AG04449 (cell line): ENCODE measurements at regions of chr1 and their contacts with region 1.

Region 1: GRCh38 chr1:200558866-200559459 is 61.6 kb downstream of the KIF14 start:
- DNase-seq: peak; percentile 21
- H3K4me3 ChIP-seq: no peak overlapping the region
- CTCF ChIP-seq: peak; percentile 62

Region 2: DNA sequence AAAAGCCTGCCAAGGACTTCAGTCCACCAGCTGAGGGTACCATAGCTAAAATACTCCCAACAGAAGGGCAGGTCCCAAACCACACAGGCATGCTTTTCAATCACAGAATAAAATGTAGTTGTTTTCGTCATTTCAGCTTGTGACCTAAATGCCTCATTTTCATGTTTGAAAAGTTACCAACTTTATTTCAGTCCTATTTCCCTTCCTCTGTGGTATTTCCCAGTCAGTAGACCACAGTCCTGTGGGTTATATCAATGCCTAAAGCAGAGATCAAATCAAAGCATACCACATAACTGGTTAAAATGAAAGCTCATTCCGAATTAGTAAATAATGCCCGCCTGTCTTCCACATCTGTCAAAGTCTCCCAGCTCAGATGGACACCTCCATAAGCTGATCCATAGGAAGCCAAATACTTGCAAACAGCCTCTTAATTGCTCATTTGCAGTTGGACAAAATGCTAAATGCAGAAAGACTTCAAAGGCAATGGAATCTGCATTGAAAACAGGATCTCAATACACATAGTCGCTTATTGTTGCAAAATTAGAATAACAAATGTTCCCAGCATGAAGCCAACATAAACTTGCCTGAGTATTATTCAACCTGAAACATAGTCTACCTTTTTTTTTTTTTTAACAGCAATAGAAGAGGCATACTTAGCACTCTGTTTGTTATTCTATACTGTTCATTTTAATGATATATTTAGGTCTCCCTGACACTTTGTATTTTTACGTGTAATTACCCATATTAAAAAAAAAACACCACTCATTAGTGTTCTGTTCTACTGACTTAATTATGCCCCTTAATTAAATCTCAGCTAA is 477.6 kb before region 1 on chr1:
- CTCF ChIA-PET with region 1: no interaction called
- POLR2A ChIA-PET with region 1: no interaction called
- DNase-seq: no peak
- H3K4me3 ChIP-seq: no peak overlapping the region
- CTCF ChIP-seq: no peak

Region 3: GRCh38 chr1:200538179-200538578 is 20.8 kb before region 1 on chr1:
- CTCF ChIA-PET with region 1: interaction called, 18 read pairs
- POLR2A ChIA-PET with region 1: no interaction called
- DNase-seq: no peak
- H3K4me3 ChIP-seq: no peak overlapping the region
- CTCF ChIP-seq: no peak

Region 4: DNA sequence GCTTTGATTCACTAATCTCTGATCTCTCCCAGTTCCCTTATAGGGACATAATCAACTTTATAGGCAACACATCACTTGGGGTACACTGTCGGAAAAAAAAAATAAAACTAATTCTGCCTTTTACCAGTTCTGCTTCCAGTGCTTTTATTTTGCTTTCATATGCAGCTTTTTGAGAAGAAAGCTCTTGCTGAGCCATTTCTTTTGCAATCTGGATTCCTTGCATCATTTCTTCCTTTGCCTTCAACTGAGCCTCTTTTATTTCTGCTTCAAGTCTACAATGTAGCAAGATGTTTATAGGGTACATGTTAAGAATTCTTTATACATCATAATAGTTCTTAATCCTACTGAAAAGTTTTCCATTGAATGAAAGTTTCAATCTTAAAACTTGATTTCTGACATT is 31.0 kb after region 1 on chr1:
- CTCF ChIA-PET with region 1: interaction called, 11 read pairs
- POLR2A ChIA-PET with region 1: no interaction called
- DNase-seq: no peak
- H3K4me3 ChIP-seq: no peak overlapping the region
- CTCF ChIP-seq: no peak

Region 5: DNA sequence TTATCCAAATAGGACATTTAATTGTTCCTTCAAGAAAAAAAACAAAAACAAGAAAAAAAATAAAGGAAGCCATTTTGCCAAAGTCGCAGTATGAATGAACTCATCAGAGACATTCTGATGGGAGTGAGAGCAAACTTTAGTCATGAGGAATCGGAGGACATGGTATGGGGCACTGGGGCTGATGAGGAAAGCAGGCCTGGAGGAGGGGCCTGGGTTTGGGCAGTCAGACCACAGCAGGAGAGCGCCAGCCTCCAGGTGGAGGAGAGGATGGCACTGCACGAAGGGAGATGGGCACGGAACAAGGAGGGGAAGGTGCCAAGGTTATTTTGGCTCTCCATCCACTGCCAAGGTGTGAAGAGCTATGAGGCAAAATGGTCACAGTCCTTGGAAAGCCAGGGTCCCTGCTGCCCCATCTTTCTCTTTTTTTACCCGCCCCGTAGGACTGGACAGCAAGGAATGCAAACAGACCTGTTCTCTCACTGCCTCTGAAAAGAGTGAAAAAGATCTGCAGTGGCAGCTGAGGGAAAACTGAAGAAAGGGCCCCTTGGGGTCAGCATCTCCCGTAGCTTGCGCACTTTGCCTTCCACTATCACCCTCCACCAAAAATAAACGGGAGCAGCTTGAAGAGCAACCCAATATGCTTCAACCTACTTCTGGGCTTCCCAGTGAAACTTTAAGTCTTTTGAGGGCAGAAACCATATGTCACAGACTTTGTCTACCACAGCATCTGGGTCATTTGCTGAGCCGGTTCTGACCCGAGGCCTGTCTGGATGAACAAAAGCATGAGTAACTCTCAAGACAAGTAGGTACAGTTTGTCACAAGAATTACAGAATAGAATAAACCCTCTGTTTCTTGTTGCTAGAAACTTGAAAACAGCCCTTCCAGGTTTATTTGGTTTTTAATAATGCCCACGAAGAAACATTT is 70.9 kb after region 1 on chr1:
- CTCF ChIA-PET with region 1: no interaction called
- POLR2A ChIA-PET with region 1: no interaction called
- DNase-seq: no peak
- H3K4me3 ChIP-seq: no peak overlapping the region
- CTCF ChIP-seq: no peak

Region 6: DNA sequence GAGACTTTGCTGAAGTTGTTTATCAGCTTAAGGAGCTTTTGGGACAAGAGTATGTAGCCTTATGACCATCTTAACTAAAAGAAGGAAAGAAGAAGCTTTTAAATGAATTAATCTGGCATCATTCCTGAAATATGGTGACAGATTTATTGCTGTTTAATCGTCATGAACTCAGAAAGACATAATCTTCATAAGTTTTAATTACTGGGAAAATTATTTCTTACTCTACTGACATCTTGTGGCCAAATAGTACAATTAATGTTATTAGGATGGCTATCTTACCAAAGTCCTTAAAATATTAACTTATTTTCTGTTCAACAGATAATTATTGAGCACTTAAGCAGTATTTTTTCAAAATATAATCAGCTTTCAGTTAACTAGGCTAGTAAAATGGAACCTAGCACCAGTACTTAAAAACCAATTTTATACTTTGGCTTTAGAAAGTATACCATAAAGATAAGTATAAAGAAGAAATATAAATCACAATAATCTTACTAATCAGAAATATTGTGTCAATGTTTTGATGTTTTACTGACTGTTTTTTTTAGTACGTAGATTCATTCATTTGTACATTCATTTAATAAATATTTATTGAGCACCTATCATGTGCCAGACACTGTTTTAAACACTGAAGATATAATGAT is 279.1 kb after region 1 on chr1:
- CTCF ChIA-PET with region 1: interaction called, 10 read pairs
- POLR2A ChIA-PET with region 1: no interaction called
- DNase-seq: no peak
- H3K4me3 ChIP-seq: no peak overlapping the region
- CTCF ChIP-seq: no peak

Region 7: DNA sequence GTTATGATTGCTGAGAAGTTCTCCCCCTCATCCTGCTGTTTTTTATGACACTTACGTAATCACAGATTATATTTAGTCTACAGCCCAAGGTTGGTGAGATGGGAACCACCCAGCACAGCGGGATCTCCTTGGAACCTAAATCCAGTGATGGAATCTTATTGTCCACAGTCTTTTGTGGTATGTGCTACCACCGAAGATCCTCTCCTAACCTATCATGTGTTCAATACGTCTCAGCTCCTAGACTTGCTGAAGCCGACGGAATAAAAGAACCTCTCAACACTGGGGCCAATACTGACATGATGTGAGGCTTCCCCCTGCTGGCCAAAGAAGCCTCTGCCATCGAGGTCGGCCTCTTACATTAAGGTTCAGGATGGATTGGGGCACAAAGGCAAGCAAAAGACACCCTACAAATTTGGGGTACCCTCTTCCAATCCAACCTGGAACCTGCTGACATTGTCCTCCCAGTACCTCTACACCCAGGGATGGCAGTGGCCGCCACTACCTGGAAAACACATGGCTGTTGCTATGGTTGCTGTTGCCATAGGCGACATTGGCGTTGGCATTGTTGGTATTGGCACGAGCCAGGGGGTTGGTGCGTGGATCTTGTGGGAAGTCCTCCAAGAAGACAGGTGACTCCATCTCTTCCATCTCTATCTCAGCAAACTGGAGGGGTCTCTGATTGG is 484.0 kb after region 1 on chr1:
- CTCF ChIA-PET with region 1: interaction called, 60 read pairs
- POLR2A ChIA-PET with region 1: no interaction called
- DNase-seq: peak; percentile 23
- H3K4me3 ChIP-seq: no peak overlapping the region
- CTCF ChIP-seq: peak; percentile 84